ENCODE measurements at regions of chr15 and their contacts with region 1.

Region 1: DNA sequence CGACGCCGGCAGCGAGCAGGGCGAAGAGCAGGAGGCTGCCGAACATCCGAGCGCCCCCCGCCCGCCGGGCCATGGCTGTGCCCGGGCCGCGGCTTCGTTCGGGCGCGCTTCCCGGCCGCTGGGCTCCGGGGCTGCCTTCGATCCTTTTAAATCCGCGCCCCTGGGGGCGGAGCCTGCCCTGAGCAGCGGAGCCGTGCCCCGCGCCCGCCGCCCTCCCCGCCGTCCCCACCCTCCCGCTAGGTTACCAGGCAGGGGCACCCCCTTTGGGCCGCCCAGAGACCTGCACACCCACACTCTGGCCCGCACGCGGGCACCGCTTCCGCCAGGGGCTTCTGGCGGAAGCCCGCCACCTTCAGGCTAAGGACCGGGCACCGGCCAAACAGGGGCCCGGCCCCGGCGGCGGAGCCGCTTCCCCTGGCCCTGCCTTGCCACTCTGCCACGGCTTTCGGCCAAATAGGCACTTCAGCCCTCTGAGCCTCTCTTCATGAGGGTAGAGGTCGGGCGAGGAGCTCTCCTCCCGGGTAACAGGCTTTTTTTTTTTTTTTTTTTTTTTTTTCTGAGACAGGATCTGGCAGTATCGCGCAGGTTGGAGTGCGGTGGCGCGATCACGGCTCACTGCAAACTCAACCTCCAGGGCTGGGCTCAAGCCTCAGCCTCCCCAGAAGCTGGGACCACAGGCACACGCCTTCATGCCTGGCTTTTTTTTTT is at the start of gene NMB:
- DNase-seq: peak; percentile 89
- H3K4me3 ChIP-seq: peak within 1 kb of the TSS; percentile 35 to 76 (median 66)
- H3K27ac ChIP-seq: peak within 1 kb of the TSS; percentile 87 to 92 (median 90)
- H3K4me1 ChIP-seq: peaks cover 0 to 36% (median 21%) of the 10 kb centered on the region in 4 donors
- H3K27me3 ChIP-seq: no peaks in the 10 kb centered on the region
- CTCF ChIP-seq: peak; percentile 19 to 67 (median 38)
- EP300 ChIP-seq: no peak
- POLR2A ChIP-seq: no peak
- total RNA-seq, gene NMB: 3.0 to 8.9 (median 8.0) TPM

Region 2: GRCh38 chr15:84600851-84601838 is 57.1 kb before region 1 on chr15 and contains the start of gene ZSCAN2:
- intact Hi-C with region 1: loop called (anchors 1 kb)
- DNase-seq: peak; percentile 97
- H3K4me3 ChIP-seq: peak within 1 kb of the TSS; percentile 77 to 98 (median 91)
- H3K27ac ChIP-seq: peak within 1 kb of the TSS; percentile 74 to 84 (median 78)
- H3K4me1 ChIP-seq: peaks cover 0 to 22% (median 10%) of the 10 kb centered on the region in 4 donors
- H3K27me3 ChIP-seq: no peaks in the 10 kb centered on the region
- CTCF ChIP-seq: no peak
- EP300 ChIP-seq: peak in 1 of 4 donors; percentile 12
- POLR2A ChIP-seq: no peak
- total RNA-seq, gene ZSCAN2: 4.2 to 17.0 (median 6.8) TPM

Region 3: DNA sequence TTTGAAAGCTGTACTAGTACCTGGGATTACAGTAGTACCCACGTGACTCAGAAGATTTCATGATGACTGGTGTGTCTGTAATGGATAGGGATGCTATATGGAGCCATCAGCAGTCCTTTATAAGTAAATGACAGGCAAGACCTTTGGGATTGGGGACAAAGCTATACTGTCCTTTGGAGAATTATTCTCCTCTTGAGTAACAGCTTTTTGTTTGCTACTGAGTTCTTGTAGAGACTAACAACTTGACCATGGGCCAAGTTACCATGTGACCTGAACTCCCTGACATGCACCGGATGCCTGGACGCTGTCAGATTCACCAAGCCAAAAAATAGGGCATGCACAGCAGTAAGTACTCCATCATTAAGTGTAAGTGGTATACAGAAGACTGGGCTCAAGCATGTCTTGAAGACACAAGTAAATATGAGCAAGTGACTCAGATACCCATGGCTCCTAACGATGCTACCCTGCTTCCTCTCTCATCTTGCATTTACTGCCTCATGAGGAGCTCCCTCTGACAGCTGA is 44.8 kb after region 1 on chr15:
- intact Hi-C with region 1: loop called (anchors 5 kb)
- DNase-seq: peak; percentile 86
- H3K4me3 ChIP-seq: no peak overlapping the region
- H3K27ac ChIP-seq: peak overlapping the region; percentile 39 to 63 (median 51)
- H3K4me1 ChIP-seq: peaks cover 0 to 19% (median 12%) of the 10 kb centered on the region in 4 donors
- H3K27me3 ChIP-seq: no peaks in the 10 kb centered on the region
- CTCF ChIP-seq: no peak
- EP300 ChIP-seq: no peak
- POLR2A ChIP-seq: no peak

Region 4: DNA sequence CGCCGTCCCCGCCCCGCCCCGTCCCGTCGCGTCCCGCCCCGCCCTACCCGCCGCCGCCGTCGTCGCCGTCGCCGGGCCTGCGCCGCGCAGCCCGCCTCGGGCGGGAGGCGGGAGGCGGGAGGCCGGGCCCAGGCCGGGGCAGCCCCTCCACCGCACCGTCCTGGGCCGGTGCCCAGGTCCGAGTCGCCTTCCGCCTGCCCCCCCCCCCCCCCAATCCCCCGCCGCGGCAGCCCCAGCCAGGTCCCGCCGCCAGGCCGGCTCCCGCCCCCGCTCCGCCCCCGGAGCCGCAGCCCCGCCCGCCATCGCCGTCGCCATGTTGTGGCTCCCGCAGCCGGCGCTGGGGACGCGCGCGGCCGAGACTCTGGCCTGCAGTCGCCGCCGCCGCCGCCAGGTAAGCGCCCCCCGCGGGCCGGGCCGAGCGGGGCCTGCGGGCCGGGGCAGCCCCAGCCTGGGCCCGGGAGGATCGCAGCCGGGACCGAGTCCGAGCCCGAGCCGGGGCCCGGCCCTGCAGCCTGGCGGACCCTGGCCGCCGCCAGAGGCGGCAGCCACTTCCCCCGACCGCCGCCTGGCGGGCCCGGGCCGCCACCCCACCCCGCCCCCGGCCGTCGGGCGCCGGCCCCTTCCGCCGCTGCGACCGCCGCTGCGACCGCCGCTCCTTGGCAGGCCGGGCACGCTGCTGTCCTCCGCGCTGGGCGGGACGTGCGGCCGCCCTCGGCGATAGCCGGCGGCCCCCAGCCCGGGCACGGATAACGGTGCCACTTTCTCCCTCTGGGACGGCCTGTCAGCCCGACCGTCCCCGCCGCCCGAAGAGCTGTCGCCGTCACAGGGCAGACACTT is 90.3 kb after region 1 on chr15 and contains the start of gene ZNF592:
- intact Hi-C with region 1: loop called (anchors 2 kb)
- DNase-seq: peak; percentile 93
- H3K4me3 ChIP-seq: peak within 1 kb of the TSS; percentile 77 to 95 (median 88)
- H3K27ac ChIP-seq: peak within 1 kb of the TSS; percentile 99 to 100 (median 100)
- H3K4me1 ChIP-seq: peaks cover 0 to 68% (median 47%) of the 10 kb centered on the region in 4 donors
- H3K27me3 ChIP-seq: no peaks in the 10 kb centered on the region
- CTCF ChIP-seq: no peak
- EP300 ChIP-seq: no peak
- POLR2A ChIP-seq: no peak
- total RNA-seq, gene ZNF592: 12.5 to 14.1 (median 13.7) TPM

Region 5: DNA sequence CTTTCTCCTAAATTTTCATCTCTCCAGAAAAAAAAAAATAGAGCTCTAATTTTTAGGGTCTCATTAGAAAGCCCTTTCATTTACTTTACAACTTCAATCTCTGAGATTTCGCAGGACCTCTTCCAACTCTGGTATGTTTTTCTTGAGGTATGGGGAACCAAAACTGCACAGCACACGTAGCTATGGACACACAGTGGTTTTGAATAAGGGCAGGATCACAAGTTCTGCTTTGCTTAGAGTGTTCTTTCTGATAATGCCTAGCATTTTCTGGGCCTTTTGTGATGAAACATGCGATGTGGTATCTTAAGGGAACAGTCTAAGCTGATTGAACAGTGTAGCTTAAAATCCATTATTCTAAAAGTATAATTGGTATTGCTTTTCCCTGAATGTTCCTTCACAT is 115.5 kb after region 1 on chr15:
- intact Hi-C with region 1: no loop called
- DNase-seq: no peak
- H3K4me3 ChIP-seq: no peak overlapping the region
- H3K27ac ChIP-seq: no peak overlapping the region
- H3K4me1 ChIP-seq: peaks cover 0 to 21% (median 17%) of the 10 kb centered on the region in 4 donors
- H3K27me3 ChIP-seq: no peaks in the 10 kb centered on the region
- CTCF ChIP-seq: no peak
- EP300 ChIP-seq: no peak
- POLR2A ChIP-seq: no peak

Region 6: GRCh38 chr15:84785053-84785452 is 126.8 kb after region 1 on chr15:
- intact Hi-C with region 1: no loop called
- DNase-seq: no peak
- H3K4me3 ChIP-seq: no peak overlapping the region
- H3K27ac ChIP-seq: peak overlapping the region in 1 of 4 donors; percentile 32
- H3K4me1 ChIP-seq: peaks cover 0 to 30% (median 26%) of the 10 kb centered on the region in 4 donors
- H3K27me3 ChIP-seq: no peaks in the 10 kb centered on the region
- CTCF ChIP-seq: no peak
- EP300 ChIP-seq: no peak
- POLR2A ChIP-seq: no peak

Region 7: DNA sequence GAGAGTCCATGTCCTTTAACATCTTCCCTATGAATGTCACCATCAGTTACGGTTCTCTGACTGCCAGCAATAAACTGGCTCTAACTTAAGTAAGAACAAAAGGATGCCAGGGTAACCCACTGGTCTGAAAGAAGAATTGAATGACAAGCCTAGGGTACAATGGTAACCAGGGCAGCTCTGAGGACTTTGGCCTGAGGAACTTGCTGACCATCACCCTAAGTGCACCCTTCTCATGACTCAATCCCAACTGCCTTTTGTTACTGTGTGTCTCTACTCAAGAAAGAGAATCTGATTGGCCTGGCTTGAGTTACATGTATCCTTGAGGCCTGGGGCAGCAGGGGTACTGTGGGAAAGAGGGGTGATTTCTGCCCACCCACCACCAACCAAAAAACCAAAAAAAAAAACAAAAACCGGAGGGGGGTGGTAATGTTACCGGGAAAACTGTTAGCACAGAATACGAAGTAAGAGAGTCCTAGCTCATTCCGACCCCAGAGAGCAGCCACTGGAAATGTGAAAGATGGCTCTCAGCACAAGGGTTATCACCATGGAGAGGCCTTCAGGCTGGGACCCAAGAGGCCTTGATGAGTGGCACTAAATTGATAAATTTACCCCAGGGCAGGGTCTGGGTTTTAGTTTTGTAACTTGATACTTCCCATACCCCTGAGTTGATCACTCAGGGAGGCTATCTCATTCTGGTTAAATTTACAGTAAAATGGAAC is 216.9 kb after region 1 on chr15:
- intact Hi-C with region 1: loop called (anchors 5 kb)
- DNase-seq: no peak
- H3K4me3 ChIP-seq: no peak overlapping the region
- H3K27ac ChIP-seq: no peak overlapping the region
- H3K4me1 ChIP-seq: peaks cover 0 to 15% (median 0%) of the 10 kb centered on the region in 4 donors
- H3K27me3 ChIP-seq: no peaks in the 10 kb centered on the region
- CTCF ChIP-seq: no peak
- EP300 ChIP-seq: no peak
- POLR2A ChIP-seq: no peak

Measured in sigmoid colon (tissue), 7 donors.